Mucosa of descending colon (tissue), 3 donors: ENCODE measurements at regions of chr16 and their contacts with region 1.

Region 1: GRCh38 chr16:69796351-69797118 is 34.4 kb downstream of the WWP2 start:
- DNase-seq: peak in 1 of 3 donors; percentile 50
- ATAC-seq: peak; percentile 94
- H3K4me3 ChIP-seq: no peak overlapping the region
- H3K4me1 ChIP-seq: peaks cover 5% of the 10 kb centered on the region
- CTCF ChIP-seq: peak; percentile 71

Region 2: DNA sequence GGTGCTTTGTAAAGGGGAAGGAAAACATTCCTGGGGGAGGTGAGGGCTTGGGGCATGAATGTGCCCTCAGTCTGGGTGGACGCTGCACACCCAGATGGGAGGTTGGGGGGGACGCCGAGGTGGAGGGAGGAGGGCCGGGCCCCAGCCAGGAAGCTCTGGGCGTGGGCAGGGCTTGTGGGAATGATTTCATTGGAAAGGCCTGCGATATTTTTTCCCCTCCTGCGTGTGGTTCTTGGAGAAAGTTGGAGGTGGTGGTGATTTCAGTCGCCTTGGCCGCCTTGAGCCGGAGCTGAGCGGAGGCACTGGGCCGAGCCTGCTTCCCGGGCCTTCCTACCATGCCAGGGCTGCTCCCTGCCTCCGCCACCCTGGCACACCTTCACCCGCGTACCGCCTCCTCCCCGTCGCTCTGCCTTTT is 128.2 kb after region 1 on chr16:
- intact Hi-C with region 1: loop called in 1 of 2 experiments (anchors 5 kb)
- DNase-seq: no peak
- ATAC-seq: no peak
- H3K4me3 ChIP-seq: no peak overlapping the region
- H3K4me1 ChIP-seq: no peaks in the 10 kb centered on the region
- CTCF ChIP-seq: no peak

Region 3: DNA sequence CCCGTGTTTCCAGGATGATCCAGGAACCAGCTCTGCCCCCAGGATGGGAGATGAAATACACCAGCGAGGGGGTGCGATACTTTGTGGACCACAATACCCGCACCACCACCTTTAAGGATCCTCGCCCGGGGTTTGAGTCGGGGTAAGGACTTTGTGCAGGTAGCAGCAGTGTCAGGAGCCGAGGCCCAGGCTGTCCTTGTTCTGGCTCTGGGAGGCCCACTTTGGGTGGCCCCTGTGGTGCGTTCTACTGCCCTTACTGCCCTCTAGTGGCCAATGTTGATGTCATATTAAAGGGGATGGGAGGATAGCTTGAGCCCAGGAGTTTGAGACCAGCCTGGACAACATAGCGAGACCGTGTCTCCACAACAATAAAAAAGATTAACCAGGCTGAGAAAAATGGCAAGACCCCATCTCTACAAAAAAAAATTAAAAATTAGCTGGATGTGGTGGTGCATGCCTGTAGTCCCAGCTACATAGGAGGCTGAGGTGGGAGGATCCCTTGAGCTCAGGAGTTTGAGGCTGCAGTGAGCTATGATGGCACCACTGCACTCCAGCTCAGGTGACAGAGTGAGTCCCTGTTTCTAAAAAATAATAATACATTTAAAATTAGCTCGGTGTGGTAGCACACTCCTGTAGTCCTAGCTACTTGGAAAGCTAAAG is 133.7 kb after region 1 on chr16:
- intact Hi-C with region 1: loop called (anchors 2 to 5 kb)
- DNase-seq: peak in 2 of 3 donors; percentile 42 to 80
- ATAC-seq: peak; percentile 82
- H3K4me3 ChIP-seq: no peak overlapping the region
- H3K4me1 ChIP-seq: no peaks in the 10 kb centered on the region
- CTCF ChIP-seq: peak; percentile 23